Panc1 (cell line): ENCODE measurements at regions of chr11 and their contacts with region 1.

Region 1: GRCh38 chr11:80748211-80748925 is 1307.5 kb upstream of the TENM4 start:
- DNase-seq: no peak
- ATAC-seq: no peak
- H3K4me3 ChIP-seq: no peak overlapping the region
- H3K27ac ChIP-seq: no peak overlapping the region
- H3K4me1 ChIP-seq: no peaks in the 10 kb centered on the region
- H3K27me3 ChIP-seq: no peaks in the 10 kb centered on the region
- CTCF ChIP-seq: no peak

Region 2: DNA sequence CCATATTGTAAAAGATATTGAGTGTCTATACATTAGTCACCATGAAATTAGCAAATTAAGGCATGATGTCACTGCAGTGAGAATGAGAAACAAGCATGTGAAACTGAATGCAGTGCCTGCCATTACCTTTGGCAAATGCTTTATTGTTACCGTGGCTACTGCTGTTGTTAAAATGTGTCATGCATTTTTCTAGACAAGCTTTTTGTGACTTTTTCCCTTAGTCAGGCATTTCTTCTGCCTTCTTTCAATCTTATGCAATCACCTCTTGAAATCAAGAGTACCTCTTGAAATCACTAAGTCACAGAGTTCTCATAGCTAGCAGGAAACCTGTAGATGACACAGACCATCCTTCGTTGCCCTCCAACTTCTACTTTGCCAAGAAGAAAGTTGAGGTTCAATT is 845.9 kb before region 1 on chr11:
- CTCF ChIA-PET with region 1: no interaction called
- POLR2A ChIA-PET with region 1: no interaction called
- in situ Hi-C with region 1: no loop called
- intact Hi-C with region 1: loop called (anchors 5 kb)
- DNase-seq: no peak
- ATAC-seq: no peak
- H3K4me3 ChIP-seq: no peak overlapping the region
- H3K27ac ChIP-seq: no peak overlapping the region
- H3K4me1 ChIP-seq: no peaks in the 10 kb centered on the region
- H3K27me3 ChIP-seq: no peaks in the 10 kb centered on the region
- CTCF ChIP-seq: no peak

Region 3: DNA sequence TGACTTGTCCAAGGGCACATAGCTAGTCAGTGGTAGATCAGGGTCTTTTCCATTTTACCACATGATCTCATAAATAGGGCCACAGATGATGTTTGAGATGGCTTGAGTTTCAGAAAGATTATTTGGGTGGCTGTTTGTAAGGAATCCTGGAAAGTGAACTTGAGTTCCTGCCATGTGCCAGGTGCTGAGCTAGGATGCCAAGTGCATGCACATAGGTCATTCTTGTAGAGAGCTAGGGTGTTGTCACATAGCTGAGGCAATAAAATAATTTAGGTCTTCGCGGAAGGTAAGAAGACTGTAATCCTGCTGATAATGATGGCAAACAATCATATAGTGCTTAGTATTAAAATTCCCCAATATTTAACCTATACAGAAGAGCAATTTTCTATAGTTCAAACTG is 144.9 kb before region 1 on chr11:
- CTCF ChIA-PET with region 1: no interaction called
- POLR2A ChIA-PET with region 1: no interaction called
- in situ Hi-C with region 1: no loop called
- intact Hi-C with region 1: no loop called
- DNase-seq: no peak
- ATAC-seq: no peak
- H3K4me3 ChIP-seq: no peak overlapping the region
- H3K27ac ChIP-seq: no peak overlapping the region
- H3K4me1 ChIP-seq: no peaks in the 10 kb centered on the region
- H3K27me3 ChIP-seq: no peaks in the 10 kb centered on the region
- CTCF ChIP-seq: no peak

Region 4: DNA sequence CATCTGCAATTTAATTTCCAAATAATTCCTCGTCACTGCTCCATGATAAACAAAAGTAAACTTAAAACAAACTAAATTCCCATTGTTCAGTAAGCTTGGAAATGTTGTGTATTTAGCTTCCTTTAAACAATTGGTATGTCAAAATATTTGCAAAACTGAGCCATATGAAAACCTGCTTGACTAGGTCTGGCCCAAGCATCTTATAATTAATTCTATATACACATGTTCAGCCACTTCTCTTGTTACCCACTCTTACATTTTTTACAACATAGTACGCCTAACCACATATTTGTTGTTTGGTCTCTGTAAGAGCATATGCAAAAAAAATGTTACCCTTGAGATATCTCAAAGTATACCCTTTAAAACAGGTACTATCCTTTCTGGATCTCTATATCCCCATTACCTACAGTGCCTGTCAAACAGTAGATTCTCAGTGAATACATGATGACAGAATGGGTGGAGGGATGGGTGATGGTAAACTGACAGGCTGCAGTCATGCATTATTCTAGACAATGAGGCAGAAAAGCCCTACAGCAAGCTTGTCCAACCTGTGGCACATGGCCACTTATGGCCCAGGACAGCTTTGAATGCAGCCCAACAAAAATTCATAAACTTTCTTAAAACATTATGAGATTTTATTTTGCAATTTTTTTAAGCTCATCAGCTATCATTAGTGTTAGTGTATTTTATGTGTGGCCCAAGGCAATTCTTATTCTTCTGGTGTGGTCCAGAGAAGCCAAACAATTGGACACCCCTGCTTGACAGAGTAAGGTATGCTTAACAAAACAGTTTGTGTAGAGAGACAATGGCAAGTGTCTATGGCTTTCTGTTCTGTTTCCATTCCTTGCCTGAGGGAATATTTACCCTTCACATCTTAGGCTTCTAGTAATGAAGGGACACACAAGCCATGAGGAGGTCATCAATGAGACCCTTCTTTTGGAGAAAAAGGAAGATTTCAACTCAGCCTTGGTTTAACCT is 29.4 kb before region 1 on chr11:
- CTCF ChIA-PET with region 1: no interaction called
- POLR2A ChIA-PET with region 1: no interaction called
- in situ Hi-C with region 1: no loop called
- intact Hi-C with region 1: no loop called
- DNase-seq: no peak
- ATAC-seq: no peak
- H3K4me3 ChIP-seq: no peak overlapping the region
- H3K27ac ChIP-seq: no peak overlapping the region
- H3K4me1 ChIP-seq: no peaks in the 10 kb centered on the region; the same call in 1 of the 2 replicates
- H3K27me3 ChIP-seq: no peaks in the 10 kb centered on the region
- CTCF ChIP-seq: no peak

Region 5: DNA sequence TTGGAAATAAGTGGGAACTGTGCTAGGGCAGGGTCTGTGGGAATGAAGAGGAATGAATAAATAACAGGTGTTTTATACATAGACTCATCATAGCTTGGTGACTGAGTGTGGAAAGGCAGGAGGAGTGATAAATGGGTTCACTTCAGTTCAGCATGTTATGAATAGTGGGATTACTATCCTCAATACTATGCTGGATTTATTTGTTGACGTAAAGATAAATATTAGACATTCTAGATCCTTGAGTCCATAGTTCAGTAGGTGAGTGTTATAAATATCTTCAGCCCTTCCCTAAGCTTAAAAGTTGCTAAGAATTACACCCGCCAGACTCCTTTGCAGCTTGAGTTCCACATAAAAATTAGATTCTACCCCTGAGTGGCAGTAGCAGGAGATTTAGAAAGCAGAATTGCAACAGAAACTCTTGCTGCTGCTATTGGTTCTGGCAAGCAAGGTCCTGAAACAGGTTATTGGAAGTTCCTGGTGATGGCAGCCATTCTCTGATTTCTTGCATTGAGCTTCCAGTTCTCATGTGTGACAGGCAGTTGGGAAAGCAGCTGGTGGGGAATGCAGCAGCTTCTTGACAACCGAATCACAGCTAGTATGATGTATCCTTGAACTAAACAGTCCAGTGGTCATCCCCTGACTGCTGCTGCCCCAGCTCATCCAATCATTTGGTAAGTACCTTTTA is 426.4 kb after region 1 on chr11:
- CTCF ChIA-PET with region 1: no interaction called
- POLR2A ChIA-PET with region 1: no interaction called
- in situ Hi-C with region 1: no loop called
- intact Hi-C with region 1: no loop called
- DNase-seq: no peak
- ATAC-seq: no peak
- H3K4me3 ChIP-seq: no peak overlapping the region
- H3K27ac ChIP-seq: no peak overlapping the region
- H3K4me1 ChIP-seq: no peaks in the 10 kb centered on the region
- H3K27me3 ChIP-seq: no peaks in the 10 kb centered on the region
- CTCF ChIP-seq: no peak

Region 6: DNA sequence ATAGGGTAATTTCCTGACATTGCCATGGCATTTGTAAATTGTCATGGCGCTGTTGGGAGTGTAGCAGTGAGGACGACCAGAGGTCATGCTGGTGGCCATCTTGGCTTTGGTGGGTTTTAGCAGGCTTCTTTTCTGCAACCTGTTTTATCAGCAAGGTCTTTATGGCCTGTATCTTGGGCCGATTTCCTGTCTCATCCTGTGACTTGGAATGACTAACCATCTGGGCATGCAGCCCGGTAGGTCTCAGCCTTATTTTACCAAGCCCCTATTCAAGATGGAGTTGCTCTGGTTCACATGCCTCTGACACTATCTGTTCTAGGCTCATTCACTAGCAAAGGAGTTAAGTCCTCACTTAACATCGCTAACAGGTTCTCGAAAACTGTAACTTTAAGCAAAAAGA is 611.1 kb after region 1 on chr11:
- CTCF ChIA-PET with region 1: no interaction called
- POLR2A ChIA-PET with region 1: no interaction called
- in situ Hi-C with region 1: no loop called
- intact Hi-C with region 1: no loop called
- DNase-seq: no peak
- ATAC-seq: no peak
- H3K4me3 ChIP-seq: no peak overlapping the region
- H3K27ac ChIP-seq: no peak overlapping the region
- H3K4me1 ChIP-seq: no peaks in the 10 kb centered on the region
- H3K27me3 ChIP-seq: no peaks in the 10 kb centered on the region
- CTCF ChIP-seq: no peak